ENCODE measurements at regions of chr18 and their contacts with region 1.

Region 1: DNA sequence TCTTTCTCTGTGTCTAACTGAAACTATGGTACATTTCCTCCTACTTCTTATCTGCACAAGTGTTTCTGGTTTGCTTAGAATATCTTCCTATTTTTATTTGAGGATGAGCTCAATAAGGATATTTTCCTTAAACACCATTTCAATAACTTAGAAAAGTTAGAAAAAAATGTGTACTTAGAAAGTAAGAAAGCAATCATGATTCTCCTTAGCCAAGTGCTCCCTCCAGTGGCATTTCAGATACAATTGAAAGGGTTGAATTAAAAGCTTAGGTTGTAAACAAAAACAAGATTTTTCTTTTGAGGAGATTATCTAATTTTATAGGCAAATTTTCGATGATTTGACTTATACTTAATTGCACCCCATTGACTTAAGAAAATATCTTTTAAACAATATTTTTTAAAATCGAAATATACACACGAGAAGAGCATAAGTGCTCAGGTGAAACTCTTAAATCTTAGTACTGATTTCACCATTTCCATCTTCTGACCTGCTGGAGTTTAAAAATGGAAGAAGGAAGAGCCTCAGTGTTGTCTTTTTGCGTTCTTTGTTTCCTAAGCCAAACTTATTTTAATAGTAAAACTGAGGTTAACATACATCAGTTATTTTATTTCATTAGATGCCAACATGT is 26.9 kb downstream of the C18orf63 start:
- H3K4me3 ChIP-seq: no peak overlapping the region
- H3K27ac ChIP-seq: no peak overlapping the region
- H3K4me1 ChIP-seq: no peaks in the 10 kb centered on the region
- CTCF ChIP-seq: peak; percentile 46

Region 2: GRCh38 chr18:74190086-74190485 is 152.4 kb before region 1 on chr18:
- CTCF ChIA-PET with region 1: interaction called, 13 read pairs
- POLR2A ChIA-PET with region 1: no interaction called
- H3K4me3 ChIP-seq: no peak overlapping the region
- H3K27ac ChIP-seq: no peak overlapping the region
- H3K4me1 ChIP-seq: no peaks in the 10 kb centered on the region; the same call in 1 of the 2 replicates
- CTCF ChIP-seq: no peak

Region 3: DNA sequence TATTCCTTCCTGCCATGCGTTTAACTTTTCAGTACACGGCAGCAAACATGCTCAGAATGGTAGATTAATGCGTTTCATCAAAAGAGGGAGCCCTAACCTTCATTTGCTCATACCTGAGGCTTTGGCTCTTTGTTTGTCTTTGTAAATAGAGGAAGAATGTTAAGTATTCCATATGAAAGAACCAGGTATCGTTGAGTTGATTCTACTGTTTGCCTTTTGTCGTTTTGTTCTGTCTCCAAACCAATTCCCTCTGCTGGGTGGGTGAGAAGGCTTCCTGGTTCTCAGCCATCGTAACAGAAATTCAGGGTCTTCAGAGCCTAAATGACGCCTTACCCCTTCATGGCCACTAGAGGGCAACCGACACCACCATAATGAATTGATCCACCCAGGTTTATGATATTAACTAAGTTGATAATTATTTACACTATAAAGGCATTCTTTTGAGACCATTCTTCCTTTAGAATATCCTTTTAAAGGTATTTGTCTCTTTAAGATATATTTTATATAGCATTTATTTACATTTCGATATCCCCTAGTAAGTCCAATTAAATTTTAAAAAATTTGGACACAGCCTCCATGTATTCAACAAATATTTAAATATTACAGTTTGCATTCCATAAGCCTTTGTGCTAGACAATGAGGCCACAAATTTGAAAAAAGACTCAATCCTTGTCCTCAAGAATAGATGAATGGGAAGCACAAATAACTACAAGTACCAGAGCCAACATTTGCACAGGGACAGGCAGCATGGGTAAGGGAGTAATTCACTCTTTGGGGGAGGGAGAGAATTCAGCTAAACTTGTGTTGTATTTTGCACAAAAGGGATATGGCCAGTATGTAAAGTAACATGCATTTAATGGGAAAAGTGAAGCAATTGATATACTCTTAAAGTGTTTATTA is 146.1 kb before region 1 on chr18:
- CTCF ChIA-PET with region 1: interaction called, 70 read pairs
- POLR2A ChIA-PET with region 1: no interaction called
- H3K4me3 ChIP-seq: peak overlapping the region; percentile 24
- H3K27ac ChIP-seq: no peak overlapping the region
- H3K4me1 ChIP-seq: no peaks in the 10 kb centered on the region
- CTCF ChIP-seq: peak; percentile 72

Region 4: GRCh38 chr18:74310411-74310810 is 32.1 kb before region 1 on chr18:
- CTCF ChIA-PET with region 1: interaction called, 19 read pairs
- POLR2A ChIA-PET with region 1: no interaction called
- H3K4me3 ChIP-seq: no peak overlapping the region
- H3K27ac ChIP-seq: no peak overlapping the region
- H3K4me1 ChIP-seq: no peaks in the 10 kb centered on the region
- CTCF ChIP-seq: no peak

Region 5: GRCh38 chr18:74328206-74328605 is 14.3 kb before region 1 on chr18:
- CTCF ChIA-PET with region 1: interaction called, 11 read pairs
- POLR2A ChIA-PET with region 1: no interaction called
- H3K4me3 ChIP-seq: no peak overlapping the region
- H3K27ac ChIP-seq: no peak overlapping the region
- H3K4me1 ChIP-seq: no peaks in the 10 kb centered on the region
- CTCF ChIP-seq: no peak

Region 6: DNA sequence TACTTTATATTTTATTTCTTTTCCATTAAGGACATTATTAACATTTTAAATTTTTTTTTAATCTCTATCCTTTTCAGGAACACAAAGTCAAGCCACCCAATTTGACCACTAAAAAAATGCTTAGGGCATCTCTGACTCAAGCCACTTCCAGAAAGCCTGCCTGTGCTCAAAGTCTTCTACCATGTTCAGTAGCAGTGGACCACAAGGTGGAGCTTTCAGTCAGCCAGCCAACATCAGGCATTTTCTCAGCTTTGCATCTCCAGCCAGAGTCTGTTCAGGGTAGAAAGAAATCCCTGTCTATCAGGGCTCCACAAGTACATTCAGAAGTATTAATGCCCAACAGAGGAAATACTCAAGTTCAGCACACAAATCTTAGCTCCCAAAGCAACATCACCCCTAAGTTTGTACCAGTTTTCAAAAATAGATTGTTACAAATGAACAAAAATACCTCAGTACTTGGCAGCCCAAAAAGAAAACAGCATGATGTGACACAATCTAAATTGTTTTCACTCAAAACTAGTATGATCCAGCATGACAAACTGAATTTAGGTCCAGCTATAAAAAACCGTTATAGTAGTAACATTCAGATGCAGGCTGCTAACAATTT is 10.7 kb after region 1 on chr18:
- CTCF ChIA-PET with region 1: interaction called, 11 read pairs
- POLR2A ChIA-PET with region 1: no interaction called
- H3K4me3 ChIP-seq: no peak overlapping the region
- H3K27ac ChIP-seq: no peak overlapping the region
- H3K4me1 ChIP-seq: no peaks in the 10 kb centered on the region
- CTCF ChIP-seq: peak; percentile 56

Region 7: DNA sequence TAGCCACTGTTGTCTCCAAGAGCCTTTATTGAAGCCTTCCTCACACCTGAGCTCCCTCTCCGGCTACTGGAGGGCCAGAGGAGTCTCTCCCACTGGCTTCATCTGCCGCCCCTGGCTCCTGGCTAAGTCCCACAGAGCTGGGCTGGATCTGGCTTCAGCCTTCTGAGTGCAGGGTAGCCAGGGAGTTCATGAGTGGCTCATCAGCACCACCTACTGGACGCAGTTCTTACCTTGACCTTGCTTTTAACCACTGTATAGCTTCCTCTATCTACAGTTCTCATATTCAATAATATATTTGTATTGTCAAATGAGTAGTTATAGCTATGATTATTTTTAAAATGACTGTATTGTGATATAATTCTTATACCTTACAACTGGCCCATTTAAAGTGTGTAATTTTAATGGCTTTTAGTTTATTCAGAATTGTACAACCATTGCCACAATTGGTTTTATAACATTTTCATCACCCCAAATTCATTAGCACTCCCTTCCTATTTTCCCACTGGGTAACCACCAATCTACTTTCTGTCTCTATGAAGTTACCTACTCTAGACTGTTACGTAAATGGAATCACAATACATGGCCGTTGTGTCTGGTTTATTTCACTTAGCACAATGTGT is 209.5 kb after region 1 on chr18:
- CTCF ChIA-PET with region 1: interaction called, 12 read pairs
- POLR2A ChIA-PET with region 1: no interaction called
- H3K4me3 ChIP-seq: no peak overlapping the region
- H3K27ac ChIP-seq: no peak overlapping the region
- H3K4me1 ChIP-seq: no peaks in the 10 kb centered on the region
- CTCF ChIP-seq: peak; percentile 61